H1 (cell line): ENCODE measurements at regions of chr12 and their contacts with region 1.

Region 1: GRCh38 chr12:6392504-6393077 is 8.6 kb downstream of the LTBR start:
- DNase-seq: no peak
- H3K4me3 ChIP-seq: no peak overlapping the region
- H3K27ac ChIP-seq: no peak overlapping the region
- H3K4me1 ChIP-seq: peaks cover 0 to 6% (median 3%) of the 10 kb centered on the region in 4 experiments; a peak in 4 of 7 replicates
- H3K27me3 ChIP-seq: no peaks in the 10 kb centered on the region
- CTCF ChIP-seq: no peak
- EP300 ChIP-seq: no peak
- POLR2A ChIP-seq: no peak
- RAD21 ChIP-seq: no peak

Region 2: DNA sequence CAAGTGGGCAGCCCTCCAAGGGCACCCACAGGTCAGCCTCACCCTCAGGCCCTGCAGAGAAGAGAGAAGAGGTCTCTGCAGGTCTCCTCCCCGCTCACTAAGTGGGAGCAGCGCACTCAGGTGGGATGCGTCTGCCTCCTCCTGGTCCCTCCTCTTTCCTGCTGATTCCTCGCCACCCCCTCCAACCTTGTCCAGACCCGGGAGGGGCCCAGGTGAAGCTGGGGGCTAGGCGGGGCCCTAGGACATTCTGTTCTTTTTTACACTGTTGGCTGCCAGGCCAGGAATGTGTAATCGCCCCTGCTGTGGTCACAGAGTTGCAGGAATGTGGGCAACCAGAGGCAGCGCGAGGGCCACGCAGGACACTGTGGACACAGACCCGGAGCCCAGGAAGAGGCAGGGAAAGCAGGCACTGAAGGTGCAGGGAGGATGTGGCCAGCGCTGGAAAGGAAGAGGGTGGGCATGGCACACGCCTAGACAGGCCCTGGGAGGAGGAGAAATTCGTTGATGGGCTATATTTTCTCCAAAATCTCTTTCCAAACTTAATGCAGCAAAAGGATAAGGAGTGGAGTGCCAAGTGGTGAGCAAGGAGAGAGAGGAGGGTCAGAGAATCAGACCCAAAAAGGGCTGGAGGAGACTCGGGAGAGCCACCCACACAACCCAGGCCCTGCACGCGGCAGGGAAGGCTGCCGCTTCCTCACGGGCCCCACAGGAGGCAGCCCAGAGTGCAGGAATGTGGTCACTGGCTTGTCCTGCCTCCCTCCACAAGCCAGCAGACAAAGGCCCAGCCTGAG is 16.3 kb before region 1 on chr12:
- CTCF ChIA-PET with region 1: interaction called, 5 read pairs
- POLR2A ChIA-PET with region 1: interaction called, 36 read pairs
- DNase-seq: peak; percentile 54 to 74
- H3K4me3 ChIP-seq: peak overlapping the region; percentile 64 to 84 (median 74)
- H3K27ac ChIP-seq: peak overlapping the region; percentile 92
- H3K4me1 ChIP-seq: peaks cover 5 to 47% (median 33%) of the 10 kb centered on the region in 4 experiments
- H3K27me3 ChIP-seq: peaks cover 0 to 2% (median 0%) of the 10 kb centered on the region in 4 experiments; a peak in 2 of 7 replicates
- CTCF ChIP-seq: peak in 2 of 3 experiments; percentile 41 to 58; a peak in 3 of 4 replicates
- EP300 ChIP-seq: no peak
- POLR2A ChIP-seq: peak in 1 of 2 experiments; percentile 69; a peak in 2 of 3 replicates
- RAD21 ChIP-seq: peak; percentile 30 to 55

Region 3: DNA sequence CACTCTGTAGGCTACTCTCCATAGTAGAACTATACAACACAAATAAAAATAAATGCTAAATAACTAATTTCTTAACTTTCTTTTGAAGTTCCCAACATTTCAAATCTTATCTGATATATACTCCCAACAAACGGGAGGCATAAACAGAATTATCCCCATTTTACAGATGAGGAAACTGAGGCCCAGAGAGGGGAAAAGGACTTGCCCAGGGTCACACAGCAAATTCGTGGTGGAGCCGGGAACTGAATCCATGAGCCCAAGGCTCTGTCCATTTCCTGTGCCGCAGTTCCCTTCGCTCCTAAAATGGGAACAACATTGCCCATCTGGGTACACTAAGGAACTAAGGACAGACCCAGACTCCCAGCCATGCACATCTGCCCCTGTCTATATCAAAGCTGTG is 284.4 kb after region 1 on chr12:
- CTCF ChIA-PET with region 1: no interaction called
- POLR2A ChIA-PET with region 1: no interaction called
- DNase-seq: no peak
- H3K4me3 ChIP-seq: no peak overlapping the region
- H3K27ac ChIP-seq: no peak overlapping the region
- H3K4me1 ChIP-seq: no peaks in the 10 kb centered on the region
- H3K27me3 ChIP-seq: no peaks in the 10 kb centered on the region
- CTCF ChIP-seq: no peak
- EP300 ChIP-seq: no peak
- POLR2A ChIP-seq: no peak
- RAD21 ChIP-seq: no peak